ENCODE measurements at regions of chr6 and their contacts with region 1.

Region 1: GRCh38 chr6:27406092-27406491 is 17.5 kb downstream of the ZNF391 start:
- DNase-seq: no peak
- ATAC-seq: no peak
- H3K4me3 ChIP-seq: no peak overlapping the region
- H3K4me3 Mint-ChIP-seq: no peak overlapping the region
- H3K27ac ChIP-seq: no peak overlapping the region
- H3K27ac Mint-ChIP-seq: no peak overlapping the region
- H3K4me1 ChIP-seq: no peaks in the 10 kb centered on the region
- H3K4me1 Mint-ChIP-seq: no peaks in the 10 kb centered on the region
- H3K27me3 ChIP-seq: no peaks in the 10 kb centered on the region
- H3K27me3 Mint-ChIP-seq: peaks cover 6% of the 10 kb centered on the region
- CTCF ChIP-seq: no peak

Region 2: GRCh38 chr6:25670793-25671513 is 1735.1 kb before region 1 on chr6:
- CTCF ChIA-PET with region 1: no interaction called
- POLR2A ChIA-PET with region 1: no interaction called
- intact Hi-C with region 1: loop called in 1 of 2 experiments (anchors 5 kb)
- DNase-seq: no peak
- ATAC-seq: no peak
- H3K4me3 ChIP-seq: no peak overlapping the region
- H3K4me3 Mint-ChIP-seq: no peak overlapping the region
- H3K27ac ChIP-seq: no peak overlapping the region
- H3K27ac Mint-ChIP-seq: no peak overlapping the region
- H3K4me1 ChIP-seq: no peaks in the 10 kb centered on the region
- H3K4me1 Mint-ChIP-seq: no peaks in the 10 kb centered on the region
- H3K27me3 ChIP-seq: no peaks in the 10 kb centered on the region
- H3K27me3 Mint-ChIP-seq: peaks cover 6% of the 10 kb centered on the region
- CTCF ChIP-seq: no peak

Measured in CD8-positive, alpha-beta T cell (primary cell).